ENCODE measurements at regions of chr7 and their contacts with region 1.

Region 1: DNA sequence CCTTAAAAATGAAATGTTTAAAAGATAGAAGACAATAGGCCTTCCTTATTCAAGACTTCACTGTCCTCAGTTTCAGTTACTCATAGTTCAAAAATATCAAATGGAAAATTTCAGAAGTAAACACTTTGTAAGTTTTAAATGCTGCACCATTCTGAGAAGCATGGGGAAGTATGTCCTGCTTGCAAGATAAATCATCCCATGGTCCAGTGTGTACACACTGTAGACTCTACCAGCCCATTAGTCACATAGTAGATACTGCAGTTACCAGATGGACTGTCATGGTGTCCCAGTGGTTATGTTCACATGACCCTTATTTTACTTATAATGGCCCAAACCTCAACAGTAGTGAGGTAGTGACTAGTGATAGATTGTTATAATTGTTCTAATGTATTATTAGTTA is 69.5 kb downstream of the PTPN12 start:
- DNase-seq: no peak
- ATAC-seq: no peak
- H3K4me3 ChIP-seq: no peak overlapping the region
- H3K4me3 Mint-ChIP-seq: no peak overlapping the region
- H3K27ac ChIP-seq: no peak overlapping the region
- H3K27ac Mint-ChIP-seq: no peak overlapping the region
- H3K4me1 ChIP-seq: no peaks in the 10 kb centered on the region
- H3K4me1 Mint-ChIP-seq: no peaks in the 10 kb centered on the region
- H3K27me3 ChIP-seq: no peaks in the 10 kb centered on the region
- H3K27me3 Mint-ChIP-seq: no peaks in the 10 kb centered on the region
- CTCF ChIP-seq: no peak

Region 2: DNA sequence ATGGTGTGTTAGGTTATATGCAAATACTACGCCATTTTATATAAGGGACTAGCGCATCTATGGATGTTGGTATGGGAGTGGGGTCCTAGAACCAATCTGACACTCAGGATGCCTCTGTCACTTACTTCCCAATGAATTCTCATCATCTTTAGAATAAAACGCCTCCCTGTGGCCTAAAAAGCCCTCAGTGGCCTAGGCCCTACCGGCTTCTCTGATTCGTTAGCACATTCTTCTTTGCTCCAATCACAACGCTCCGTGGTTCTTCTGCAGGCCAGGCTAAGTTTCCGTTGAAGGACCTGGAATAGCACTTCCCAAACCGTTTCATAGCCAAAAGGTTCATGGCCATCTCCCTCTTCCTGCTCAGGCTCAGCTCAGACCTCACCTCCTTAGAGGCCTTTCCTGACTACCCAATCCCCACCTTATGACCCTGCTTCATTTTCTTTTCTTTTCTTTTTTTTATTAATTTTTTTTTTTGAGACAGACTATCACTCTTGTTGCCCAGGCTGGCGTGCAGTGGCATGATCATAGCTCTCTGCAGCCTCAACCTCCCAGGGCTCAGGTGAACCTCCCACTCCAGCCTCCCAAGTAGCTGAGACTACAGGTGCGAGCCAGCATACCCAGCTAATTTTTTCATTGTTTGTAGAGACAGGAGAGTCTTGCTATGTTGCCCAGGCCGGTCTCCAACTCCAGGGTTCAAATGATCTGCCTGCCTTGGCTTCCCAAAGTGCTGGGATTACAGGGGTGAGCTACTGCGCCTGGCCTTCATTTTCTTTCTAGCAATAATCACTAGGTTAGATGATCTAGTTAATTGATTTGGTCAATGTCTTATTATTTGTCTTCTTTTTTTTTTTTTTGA is 1223.2 kb before region 1 on chr7:
- CTCF ChIA-PET with region 1: no interaction called
- POLR2A ChIA-PET with region 1: no interaction called
- intact Hi-C with region 1: no loop called
- DNase-seq: no peak
- ATAC-seq: no peak
- H3K4me3 ChIP-seq: no peak overlapping the region
- H3K4me3 Mint-ChIP-seq: no peak overlapping the region
- H3K27ac ChIP-seq: no peak overlapping the region
- H3K27ac Mint-ChIP-seq: peak overlapping the region; percentile 8
- H3K4me1 ChIP-seq: peaks cover 0 to 11% of the 10 kb centered on the region in 2 donors
- H3K4me1 Mint-ChIP-seq: peaks cover 14% of the 10 kb centered on the region
- H3K27me3 ChIP-seq: no peaks in the 10 kb centered on the region
- H3K27me3 Mint-ChIP-seq: no peaks in the 10 kb centered on the region
- CTCF ChIP-seq: no peak

Region 3: GRCh38 chr7:77368974-77369373 is 237.6 kb before region 1 on chr7:
- CTCF ChIA-PET with region 1: no interaction called
- POLR2A ChIA-PET with region 1: no interaction called
- intact Hi-C with region 1: loop called (anchors 10 kb)
- DNase-seq: no peak
- ATAC-seq: peak; percentile 66
- H3K4me3 ChIP-seq: no peak overlapping the region
- H3K4me3 Mint-ChIP-seq: no peak overlapping the region
- H3K27ac ChIP-seq: no peak overlapping the region
- H3K27ac Mint-ChIP-seq: no peak overlapping the region
- H3K4me1 ChIP-seq: no peaks in the 10 kb centered on the region
- H3K4me1 Mint-ChIP-seq: peaks cover 9% of the 10 kb centered on the region
- H3K27me3 ChIP-seq: no peaks in the 10 kb centered on the region
- H3K27me3 Mint-ChIP-seq: no peaks in the 10 kb centered on the region
- CTCF ChIP-seq: peak; percentile 29

Measured in B cell (primary cell).